ENCODE measurements at regions of chr3 and their contacts with region 1.

Region 1: DNA sequence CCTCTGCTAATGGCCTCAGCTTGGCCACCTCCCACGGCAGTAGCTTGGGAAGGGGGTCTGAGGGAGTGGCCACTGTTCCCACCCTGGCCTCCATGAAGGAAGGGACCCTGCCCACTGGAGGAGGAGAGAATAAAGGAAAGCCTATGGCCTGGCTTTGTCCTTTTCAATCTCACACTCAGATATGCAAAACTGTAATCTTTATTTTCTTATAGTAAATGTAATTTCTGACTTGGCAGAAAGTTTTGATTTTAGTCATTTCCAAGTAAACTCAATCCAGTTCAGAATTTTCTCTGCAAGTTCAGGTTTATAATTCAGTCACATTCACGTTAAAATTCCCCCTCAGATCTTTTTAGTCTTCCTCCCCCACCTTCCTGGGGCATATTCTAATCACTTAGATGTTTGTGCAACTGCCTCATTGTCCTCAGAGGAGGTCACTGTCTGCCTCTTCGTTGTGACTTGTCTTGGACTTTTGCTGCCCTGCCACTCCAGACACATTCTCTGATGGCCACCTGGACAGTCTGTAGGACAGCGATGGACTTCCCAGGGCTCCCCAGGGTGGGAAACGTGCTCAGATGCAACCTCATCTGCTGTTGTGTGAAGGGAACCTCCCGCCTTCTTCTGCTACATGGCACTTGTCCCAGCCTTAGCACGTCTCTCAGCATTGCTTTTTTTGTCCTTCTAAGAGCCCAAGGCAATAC is 222.8 kb upstream of the TBL1XR1 start:
- DNase-seq: no peak
- H3K4me3 Mint-ChIP-seq: no peak overlapping the region
- H3K27ac Mint-ChIP-seq: peak overlapping the region; percentile 60
- H3K4me1 Mint-ChIP-seq: peaks cover 39% of the 10 kb centered on the region
- H3K27me3 Mint-ChIP-seq: no peaks in the 10 kb centered on the region

Region 2: GRCh38 chr3:177371888-177372287 is 48.2 kb before region 1 on chr3:
- intact Hi-C with region 1: no loop called
- DNase-seq: no peak
- H3K4me3 Mint-ChIP-seq: no peak overlapping the region
- H3K27ac Mint-ChIP-seq: no peak overlapping the region
- H3K4me1 Mint-ChIP-seq: no peaks in the 10 kb centered on the region
- H3K27me3 Mint-ChIP-seq: no peaks in the 10 kb centered on the region

Region 3: GRCh38 chr3:177525987-177526712 is 106.1 kb after region 1 on chr3:
- intact Hi-C with region 1: loop called (anchors 5 kb)
- DNase-seq: no peak
- H3K4me3 Mint-ChIP-seq: no peak overlapping the region
- H3K27ac Mint-ChIP-seq: no peak overlapping the region
- H3K4me1 Mint-ChIP-seq: peaks cover 21% of the 10 kb centered on the region
- H3K27me3 Mint-ChIP-seq: no peaks in the 10 kb centered on the region

Region 4: GRCh38 chr3:177679568-177680441 is 259.8 kb after region 1 on chr3:
- intact Hi-C with region 1: no loop called
- DNase-seq: peak; percentile 9
- H3K4me3 Mint-ChIP-seq: no peak overlapping the region
- H3K27ac Mint-ChIP-seq: peak overlapping the region; percentile 24
- H3K4me1 Mint-ChIP-seq: peaks cover 22% of the 10 kb centered on the region
- H3K27me3 Mint-ChIP-seq: no peaks in the 10 kb centered on the region